Common myeloid progenitor, CD34-positive (primary cell): ENCODE measurements at regions of chr11 and their contacts with region 1.

Region 1: DNA sequence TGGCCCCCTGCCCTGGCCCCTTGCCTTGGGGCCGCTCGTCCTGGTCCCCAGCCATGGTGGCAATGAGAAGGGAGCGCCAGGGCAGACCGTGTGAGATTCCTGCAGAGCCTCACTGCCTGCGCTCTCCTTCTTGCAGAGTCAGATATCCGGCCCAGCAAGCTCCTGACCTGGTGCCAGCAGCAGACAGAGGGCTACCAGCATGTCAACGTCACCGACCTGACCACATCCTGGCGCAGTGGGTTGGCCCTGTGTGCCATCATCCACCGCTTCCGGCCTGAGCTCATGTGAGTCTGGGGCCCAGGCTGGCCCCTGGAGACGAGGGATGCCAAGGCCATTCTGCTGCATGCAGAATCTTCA is 114.1 kb downstream of the MICAL2 start:
- DNase-seq: peak; percentile 98 to 99 (median 99)
- H3K4me3 ChIP-seq: peak overlapping the region in 4 of 7 experiments; percentile 21 to 59 (median 39)
- H3K27ac ChIP-seq: peak overlapping the region; percentile 19 to 53
- H3K4me1 ChIP-seq: peaks cover 14 to 46% (median 43%) of the 10 kb centered on the region in 4 experiments
- H3K27me3 ChIP-seq: no peaks in the 10 kb centered on the region

Region 2: GRCh38 chr11:12050470-12051286 is 173.8 kb before region 1 on chr11:
- CTCF ChIA-PET with region 1: interaction called, 14 read pairs
- POLR2A ChIA-PET with region 1: interaction called, 3 read pairs
- DNase-seq: peak in 2 of 3 donors; percentile 58 to 67
- H3K4me3 ChIP-seq: no peak overlapping the region
- H3K27ac ChIP-seq: no peak overlapping the region
- H3K4me1 ChIP-seq: peaks cover 0 to 12% (median 9%) of the 10 kb centered on the region in 4 experiments
- H3K27me3 ChIP-seq: no peaks in the 10 kb centered on the region

Region 3: DNA sequence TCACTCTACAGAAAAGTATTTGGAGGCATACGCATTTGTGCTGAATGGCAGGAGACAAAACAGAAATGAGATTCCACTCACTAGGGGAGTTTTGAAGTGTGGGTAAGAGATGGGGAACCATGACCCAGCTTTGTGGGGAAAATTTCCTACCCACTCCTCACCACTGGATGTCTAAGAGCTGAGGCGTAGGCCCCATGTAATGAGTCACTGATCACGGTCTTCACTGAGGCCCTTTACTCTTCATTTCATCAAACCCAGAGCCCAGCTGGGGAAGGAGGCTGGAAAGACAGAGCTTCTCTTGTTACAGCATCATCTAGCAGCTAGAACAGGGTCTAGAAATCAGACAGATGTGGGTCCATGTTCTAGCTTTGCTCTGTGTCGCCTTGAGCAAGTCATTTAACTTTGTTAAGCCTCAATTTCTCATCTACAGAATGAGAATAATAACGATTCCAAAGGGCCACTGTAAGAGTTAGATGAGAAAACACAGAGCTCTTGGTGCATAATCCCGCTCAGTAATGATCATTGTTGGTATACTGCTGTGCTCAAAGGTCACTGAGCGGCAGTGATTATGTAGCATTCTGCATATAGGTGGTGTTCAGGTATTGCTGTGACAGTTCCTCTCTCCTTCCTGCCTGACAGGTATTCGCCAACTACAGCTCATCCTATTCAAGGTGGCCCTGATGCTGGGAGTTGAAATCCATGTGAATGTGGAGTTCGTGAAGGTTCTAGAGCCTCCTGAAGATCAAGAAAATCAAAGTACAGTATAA is 16.9 kb before region 1 on chr11:
- CTCF ChIA-PET with region 1: interaction called, 10 read pairs
- POLR2A ChIA-PET with region 1: interaction called, 3 read pairs
- DNase-seq: no peak
- H3K4me3 ChIP-seq: no peak overlapping the region
- H3K27ac ChIP-seq: no peak overlapping the region
- H3K4me1 ChIP-seq: no peaks in the 10 kb centered on the region
- H3K27me3 ChIP-seq: no peaks in the 10 kb centered on the region

Region 4: DNA sequence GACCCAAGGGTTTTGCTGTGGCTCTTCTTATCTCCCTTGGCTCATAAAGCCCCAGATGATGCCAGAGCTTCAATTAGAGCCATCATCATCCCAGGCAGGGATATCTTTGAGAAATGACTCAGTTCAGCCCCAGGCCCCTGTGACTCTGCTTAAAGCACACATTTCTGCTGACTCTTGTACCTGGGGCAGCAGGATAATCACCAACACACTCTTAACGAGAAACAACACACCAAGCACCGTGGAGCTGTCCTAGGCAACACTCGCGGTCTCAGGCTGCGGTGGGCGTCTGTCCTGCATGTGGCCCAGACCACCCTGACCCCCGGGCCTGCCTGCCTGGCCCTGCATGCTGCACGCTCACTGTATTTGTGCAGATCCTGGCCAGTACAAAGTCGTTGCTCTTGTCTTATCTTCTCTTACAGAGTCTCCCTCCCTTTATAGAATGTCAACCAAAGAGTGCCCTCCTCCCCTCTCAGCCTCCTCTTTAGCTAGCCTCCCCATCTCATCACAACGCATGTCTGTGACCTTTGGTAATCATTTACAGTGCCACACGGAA is 38.7 kb after region 1 on chr11:
- CTCF ChIA-PET with region 1: no interaction called
- POLR2A ChIA-PET with region 1: no interaction called
- DNase-seq: no peak
- H3K4me3 ChIP-seq: no peak overlapping the region
- H3K27ac ChIP-seq: no peak overlapping the region
- H3K4me1 ChIP-seq: no peaks in the 10 kb centered on the region
- H3K27me3 ChIP-seq: peaks cover 0 to 2% (median 0%) of the 10 kb centered on the region in 5 experiments